K562 (cell line): ENCODE measurements at regions of chrX and their contacts with region 1.

Region 1: GRCh38 chrX:151505796-151506195 is 57.7 kb upstream of the PASD1 start:
- DNase-seq: peak; percentile 16 to 49 (median 22)
- ATAC-seq: peak; percentile 93
- H3K4me3 ChIP-seq: no peak overlapping the region
- H3K27ac ChIP-seq: no peak overlapping the region
- H3K4me1 ChIP-seq: no peaks in the 10 kb centered on the region; a peak in 1 of 5 replicates
- H3K27me3 ChIP-seq: no peaks in the 10 kb centered on the region
- CTCF ChIP-seq: peak; percentile 57 to 77 (median 69); a peak in 5 of 6 replicates
- EP300 ChIP-seq: no peak
- POLR2A ChIP-seq: no peak
- RAD21 ChIP-seq: peak; percentile 68 to 78

Region 2: GRCh38 chrX:150990890-150991289 is 514.9 kb before region 1 on chrX:
- CTCF ChIA-PET with region 1: no interaction called
- POLR2A ChIA-PET with region 1: no interaction called
- in situ Hi-C with region 1: no loop called
- intact Hi-C with region 1: no loop called
- DNase-seq: no peak
- ATAC-seq: no peak; the same call in 2 of the 3 replicates
- H3K4me3 ChIP-seq: no peak overlapping the region
- H3K27ac ChIP-seq: no peak overlapping the region
- H3K4me1 ChIP-seq: no peaks in the 10 kb centered on the region; a peak in 1 of 5 replicates
- H3K27me3 ChIP-seq: no peaks in the 10 kb centered on the region
- CTCF ChIP-seq: no peak
- EP300 ChIP-seq: no peak
- POLR2A ChIP-seq: no peak
- RAD21 ChIP-seq: no peak

Region 3: DNA sequence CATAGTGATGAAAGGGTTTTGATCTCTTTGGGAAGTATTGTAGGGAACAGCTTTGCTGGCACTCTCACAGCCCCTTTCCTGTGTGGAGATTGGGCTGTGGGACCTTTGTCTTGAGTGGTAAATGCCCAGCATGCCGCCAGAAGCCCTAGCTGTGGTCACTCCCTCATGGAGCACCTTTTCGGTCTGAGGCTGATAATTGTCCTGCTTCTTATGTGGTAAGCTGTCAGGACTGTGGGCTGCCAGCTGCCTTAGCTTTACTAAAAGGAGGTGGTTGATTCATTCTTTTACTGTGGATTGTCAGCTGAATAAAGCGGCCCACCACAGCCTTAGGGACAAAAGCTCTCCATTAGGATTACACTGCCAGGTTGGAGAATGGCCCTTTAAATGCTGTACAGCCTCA is 64.8 kb after region 1 on chrX:
- CTCF ChIA-PET with region 1: no interaction called
- POLR2A ChIA-PET with region 1: no interaction called
- in situ Hi-C with region 1: no loop called
- intact Hi-C with region 1: no loop called
- DNase-seq: no peak
- ATAC-seq: no peak
- H3K4me3 ChIP-seq: no peak overlapping the region
- H3K27ac ChIP-seq: no peak overlapping the region
- H3K4me1 ChIP-seq: no peaks in the 10 kb centered on the region; a peak in 1 of 5 replicates
- H3K27me3 ChIP-seq: peaks cover 0 to 3% of the 10 kb centered on the region in 2 experiments; a peak in 1 of 5 replicates
- CTCF ChIP-seq: no peak
- EP300 ChIP-seq: no peak
- POLR2A ChIP-seq: no peak
- RAD21 ChIP-seq: no peak

Region 4: DNA sequence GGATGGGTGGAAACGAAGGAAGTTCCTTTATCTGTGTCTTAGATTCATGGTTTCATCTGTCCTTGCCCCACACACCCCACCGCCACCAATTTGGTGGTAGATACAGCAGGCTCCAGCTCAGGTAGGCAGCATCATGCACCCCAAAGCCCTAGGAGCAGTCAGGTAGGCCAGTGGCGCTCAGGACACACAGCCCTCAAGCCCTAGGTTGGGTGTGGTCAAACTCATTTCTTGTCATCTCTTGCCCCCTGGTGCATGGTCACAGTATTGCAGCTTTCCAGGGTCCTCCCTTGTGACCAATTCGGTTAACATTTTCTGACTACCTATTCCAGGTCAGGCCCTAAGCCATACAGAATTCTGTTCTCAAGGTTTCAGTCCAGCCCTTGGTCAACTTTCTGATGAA is 175.0 kb after region 1 on chrX:
- CTCF ChIA-PET with region 1: interaction called, 8 read pairs
- POLR2A ChIA-PET with region 1: no interaction called
- in situ Hi-C with region 1: loop called (anchors 5 kb)
- intact Hi-C with region 1: loop called (anchors 1 kb)
- DNase-seq: peak; percentile 62 to 78 (median 72)
- ATAC-seq: peak; percentile 99
- H3K4me3 ChIP-seq: no peak overlapping the region
- H3K27ac ChIP-seq: no peak overlapping the region
- H3K4me1 ChIP-seq: peaks cover 0 to 5% of the 10 kb centered on the region in 2 experiments; a peak in 3 of 5 replicates
- H3K27me3 ChIP-seq: peaks cover 0 to 12% of the 10 kb centered on the region in 2 experiments; a peak in 2 of 5 replicates
- CTCF ChIP-seq: peak; percentile 65 to 82 (median 81)
- EP300 ChIP-seq: no peak
- POLR2A ChIP-seq: no peak
- RAD21 ChIP-seq: peak; percentile 87 to 90

Region 5: GRCh38 chrX:151722241-151722846 is 216.5 kb after region 1 on chrX:
- CTCF ChIA-PET with region 1: interaction called, 3 read pairs
- POLR2A ChIA-PET with region 1: no interaction called
- in situ Hi-C with region 1: no loop called
- intact Hi-C with region 1: loop called (anchors 2 kb)
- DNase-seq: peak; percentile 59 to 65 (median 64)
- ATAC-seq: peak; percentile 99
- H3K4me3 ChIP-seq: no peak overlapping the region
- H3K27ac ChIP-seq: no peak overlapping the region
- H3K4me1 ChIP-seq: peaks cover 0 to 7% of the 10 kb centered on the region in 2 experiments; a peak in 2 of 5 replicates
- H3K27me3 ChIP-seq: no peaks in the 10 kb centered on the region; a peak in 1 of 5 replicates
- CTCF ChIP-seq: peak; percentile 74 to 81 (median 74)
- EP300 ChIP-seq: no peak
- POLR2A ChIP-seq: no peak
- RAD21 ChIP-seq: peak; percentile 42 to 68

Region 6: DNA sequence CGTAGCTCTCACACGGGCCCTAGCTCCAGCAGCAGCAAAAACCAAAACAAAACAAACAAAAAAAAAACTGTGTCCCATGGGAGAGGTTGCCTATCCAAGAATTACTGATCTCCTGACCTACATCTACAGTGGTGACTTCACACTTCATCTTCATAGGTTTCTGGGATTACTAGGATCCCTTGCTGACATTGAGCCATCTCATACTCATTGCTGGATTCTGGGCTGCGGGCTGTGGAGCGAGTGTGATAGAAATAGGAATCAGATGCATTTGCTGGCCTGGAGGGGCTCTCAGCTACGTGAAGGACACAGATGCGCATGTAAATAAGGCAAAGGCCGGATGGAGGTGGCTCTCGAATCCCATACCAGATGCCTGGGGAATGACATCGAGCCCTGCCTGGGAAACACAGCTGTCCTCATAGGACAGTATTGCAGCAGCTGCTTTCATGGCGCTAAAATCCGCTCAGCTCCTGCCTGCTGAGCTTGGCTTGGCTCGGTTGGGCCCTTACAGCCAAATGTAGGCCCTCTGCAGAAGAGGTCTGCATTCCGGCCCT is 270.5 kb after region 1 on chrX:
- CTCF ChIA-PET with region 1: no interaction called
- POLR2A ChIA-PET with region 1: no interaction called
- in situ Hi-C with region 1: no loop called
- intact Hi-C with region 1: no loop called
- DNase-seq: no peak
- ATAC-seq: no peak
- H3K4me3 ChIP-seq: no peak overlapping the region
- H3K27ac ChIP-seq: no peak overlapping the region
- H3K4me1 ChIP-seq: no peaks in the 10 kb centered on the region
- H3K27me3 ChIP-seq: peaks cover 8 to 41% of the 10 kb centered on the region in 2 experiments; a peak in 3 of 5 replicates
- CTCF ChIP-seq: no peak
- EP300 ChIP-seq: no peak
- POLR2A ChIP-seq: no peak
- RAD21 ChIP-seq: no peak